CD8-positive, alpha-beta T cell (primary cell): ENCODE measurements at regions of chr7 and their contacts with region 1.

Region 1: GRCh38 chr7:149497456-149498261 is at the start of gene ZNF746:
- DNase-seq: peak; percentile 59 to 91 (median 78)
- ATAC-seq: peak; percentile 93
- H3K4me3 ChIP-seq: peak within 1 kb of the TSS; percentile 56 to 71
- H3K4me3 Mint-ChIP-seq: peak within 1 kb of the TSS; percentile 95
- H3K27ac ChIP-seq: peak within 1 kb of the TSS; percentile 40 to 51
- H3K27ac Mint-ChIP-seq: peak within 1 kb of the TSS; percentile 94
- H3K4me1 ChIP-seq: peaks cover 19% of the 10 kb centered on the region
- H3K4me1 Mint-ChIP-seq: peaks cover 32% of the 10 kb centered on the region
- H3K27me3 ChIP-seq: no peaks in the 10 kb centered on the region
- H3K27me3 Mint-ChIP-seq: no peaks in the 10 kb centered on the region
- CTCF ChIP-seq: peak; percentile 33
- total RNA-seq, gene ZNF746: 28.4 to 31.1 TPM

Region 2: DNA sequence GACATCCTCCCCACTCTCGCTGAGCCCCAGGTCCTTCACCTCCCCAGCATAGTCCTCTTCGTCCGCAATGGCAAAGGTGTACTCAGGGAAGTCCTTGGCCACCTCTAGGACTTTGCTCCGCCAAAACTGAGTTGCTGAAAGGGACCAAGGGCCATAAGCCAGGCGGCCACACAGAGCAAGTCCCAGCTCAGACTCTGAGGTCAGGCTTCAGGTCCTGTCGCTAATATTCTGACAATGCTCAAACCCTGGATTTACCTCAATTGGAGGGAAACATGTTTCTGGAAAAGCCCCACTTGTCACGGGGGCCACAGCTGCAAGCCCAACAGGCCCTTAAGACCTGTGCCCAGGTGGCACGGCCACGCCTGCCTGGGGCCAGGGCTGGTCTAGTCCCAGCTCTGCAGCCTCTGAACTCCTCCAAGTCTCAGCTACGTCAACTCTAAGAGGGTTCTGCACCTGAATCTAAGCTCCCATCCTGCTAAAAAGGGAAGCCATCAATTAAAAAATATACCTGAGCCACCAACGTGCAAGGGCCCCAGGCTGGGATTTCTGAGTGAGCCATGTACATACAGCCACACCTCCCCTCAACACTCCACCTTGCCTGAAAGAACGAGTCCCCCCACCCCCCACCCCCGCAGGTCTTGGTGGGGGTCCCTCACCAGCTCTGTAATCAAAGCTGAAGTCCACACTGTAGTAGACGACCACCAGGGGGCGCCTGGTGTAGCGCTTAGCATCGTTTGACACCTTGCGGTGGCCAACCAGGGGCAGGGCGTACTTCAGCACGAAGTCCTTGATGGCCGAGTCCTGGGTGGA is 492.2 kb before region 1 on chr7:
- CTCF ChIA-PET with region 1: no interaction called
- POLR2A ChIA-PET with region 1: no interaction called
- intact Hi-C with region 1: loop called (anchors 5 to 10 kb)
- DNase-seq: peak; percentile 61 to 91 (median 87)
- ATAC-seq: peak; percentile 92
- H3K4me3 ChIP-seq: no peak overlapping the region
- H3K4me3 Mint-ChIP-seq: no peak overlapping the region
- H3K27ac ChIP-seq: no peak overlapping the region
- H3K27ac Mint-ChIP-seq: no peak overlapping the region
- H3K4me1 ChIP-seq: peaks cover 4% of the 10 kb centered on the region
- H3K4me1 Mint-ChIP-seq: peaks cover 4% of the 10 kb centered on the region
- H3K27me3 ChIP-seq: no peaks in the 10 kb centered on the region
- H3K27me3 Mint-ChIP-seq: no peaks in the 10 kb centered on the region
- CTCF ChIP-seq: peak; percentile 75

Region 3: GRCh38 chr7:149209518-149210269 is 288.0 kb before region 1 on chr7:
- CTCF ChIA-PET with region 1: no interaction called
- POLR2A ChIA-PET with region 1: no interaction called
- intact Hi-C with region 1: loop called in 1 of 2 experiments (anchors 1 kb)
- DNase-seq: peak; percentile 30 to 70 (median 59)
- ATAC-seq: peak; percentile 86
- H3K4me3 ChIP-seq: no peak overlapping the region
- H3K4me3 Mint-ChIP-seq: no peak overlapping the region
- H3K27ac ChIP-seq: no peak overlapping the region
- H3K27ac Mint-ChIP-seq: no peak overlapping the region
- H3K4me1 ChIP-seq: no peaks in the 10 kb centered on the region
- H3K4me1 Mint-ChIP-seq: peaks cover 5% of the 10 kb centered on the region
- H3K27me3 ChIP-seq: no peaks in the 10 kb centered on the region
- H3K27me3 Mint-ChIP-seq: no peaks in the 10 kb centered on the region
- CTCF ChIP-seq: peak; percentile 58

Region 4: DNA sequence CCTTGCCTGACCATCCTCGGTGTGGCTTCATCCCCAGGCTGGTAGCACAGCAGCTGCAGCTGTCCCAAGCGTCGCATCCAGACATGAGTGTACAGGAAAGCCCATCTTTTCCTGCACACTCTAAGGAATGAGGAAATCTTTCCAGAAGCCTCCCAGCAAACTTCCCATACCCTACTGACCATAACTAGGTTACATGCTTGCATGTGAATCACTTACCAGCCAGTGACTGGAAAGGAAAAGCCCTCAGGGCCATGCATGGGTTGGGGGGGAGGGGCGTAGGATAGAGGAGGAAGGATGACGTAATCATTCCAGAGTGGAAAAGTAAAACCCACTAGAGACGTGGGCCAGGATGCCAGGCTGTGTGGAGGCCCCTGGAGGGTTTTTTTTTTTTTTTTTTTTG is 277.1 kb before region 1 on chr7:
- CTCF ChIA-PET with region 1: no interaction called
- POLR2A ChIA-PET with region 1: no interaction called
- intact Hi-C with region 1: no loop called
- DNase-seq: no peak
- ATAC-seq: no peak
- H3K4me3 ChIP-seq: no peak overlapping the region
- H3K4me3 Mint-ChIP-seq: no peak overlapping the region
- H3K27ac ChIP-seq: no peak overlapping the region
- H3K27ac Mint-ChIP-seq: no peak overlapping the region
- H3K4me1 ChIP-seq: no peaks in the 10 kb centered on the region
- H3K4me1 Mint-ChIP-seq: no peaks in the 10 kb centered on the region
- H3K27me3 ChIP-seq: no peaks in the 10 kb centered on the region
- H3K27me3 Mint-ChIP-seq: no peaks in the 10 kb centered on the region
- CTCF ChIP-seq: no peak

Region 5: GRCh38 chr7:149261829-149262617 is 235.6 kb before region 1 on chr7 and contains the start of gene ZNF783:
- CTCF ChIA-PET with region 1: no interaction called
- POLR2A ChIA-PET with region 1: no interaction called
- intact Hi-C with region 1: loop called (anchors 2 to 5 kb)
- DNase-seq: peak; percentile 68 to 96 (median 83)
- ATAC-seq: peak; percentile 93
- H3K4me3 ChIP-seq: peak within 1 kb of the TSS; percentile 69
- H3K4me3 Mint-ChIP-seq: peak within 1 kb of the TSS; percentile 86
- H3K27ac ChIP-seq: peak within 1 kb of the TSS; percentile 50 to 83
- H3K27ac Mint-ChIP-seq: peak within 1 kb of the TSS; percentile 94
- H3K4me1 ChIP-seq: peaks cover 30% of the 10 kb centered on the region
- H3K4me1 Mint-ChIP-seq: peaks cover 37% of the 10 kb centered on the region
- H3K27me3 ChIP-seq: no peaks in the 10 kb centered on the region
- H3K27me3 Mint-ChIP-seq: no peaks in the 10 kb centered on the region
- CTCF ChIP-seq: peak; percentile 87
- total RNA-seq, gene ZNF783: 24.0 to 27.3 TPM

Region 6: GRCh38 chr7:149310113-149310836 is 187.4 kb before region 1 on chr7:
- CTCF ChIA-PET with region 1: no interaction called
- POLR2A ChIA-PET with region 1: no interaction called
- intact Hi-C with region 1: no loop called
- DNase-seq: peak in 2 of 9 experiments; percentile 44 to 57
- ATAC-seq: peak; percentile 44
- H3K4me3 ChIP-seq: no peak overlapping the region
- H3K4me3 Mint-ChIP-seq: no peak overlapping the region
- H3K27ac ChIP-seq: no peak overlapping the region
- H3K27ac Mint-ChIP-seq: peak overlapping the region; percentile 52
- H3K4me1 ChIP-seq: no peaks in the 10 kb centered on the region
- H3K4me1 Mint-ChIP-seq: peaks cover 6% of the 10 kb centered on the region
- H3K27me3 ChIP-seq: no peaks in the 10 kb centered on the region
- H3K27me3 Mint-ChIP-seq: peaks cover 2% of the 10 kb centered on the region
- CTCF ChIP-seq: peak; percentile 48

Region 7: DNA sequence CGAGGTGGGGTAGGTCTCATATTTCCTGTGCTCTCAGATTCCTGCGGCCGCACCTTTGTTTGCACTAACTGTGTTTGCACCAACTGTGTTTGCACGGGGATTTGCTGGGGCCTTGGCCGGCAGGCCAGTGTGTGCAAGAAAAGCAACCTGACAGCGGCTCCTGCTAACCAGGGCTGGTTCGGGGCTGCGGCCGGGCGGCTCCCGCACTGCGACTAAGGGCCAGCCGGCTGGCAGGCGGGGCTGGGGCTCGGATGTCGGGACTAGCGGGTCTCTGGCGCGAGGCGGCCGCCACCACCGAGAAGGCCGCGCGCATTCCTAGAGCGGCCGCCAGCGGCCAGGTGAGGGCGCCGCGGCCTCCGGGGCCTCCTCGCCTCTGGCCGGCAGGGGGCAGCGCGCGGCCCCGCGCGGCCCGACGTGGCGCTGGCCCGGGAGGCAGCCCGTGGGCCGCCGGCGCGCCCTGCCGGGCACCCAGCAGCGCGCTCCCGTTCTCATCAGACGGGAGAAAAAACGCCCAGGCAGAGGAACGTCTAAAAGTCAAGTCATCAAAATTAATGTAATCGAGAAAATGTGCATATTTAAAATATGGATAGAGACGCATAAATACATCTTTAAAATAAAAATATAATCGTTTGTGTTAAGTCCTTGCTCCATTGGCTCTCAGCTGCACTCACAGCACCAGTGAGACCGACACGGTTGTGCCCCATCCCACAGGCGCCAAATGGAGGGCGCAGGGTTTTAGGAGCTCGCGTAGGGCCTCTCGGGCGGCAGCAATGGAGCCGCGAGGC is 75.3 kb before region 1 on chr7:
- CTCF ChIA-PET with region 1: interaction called, 4 read pairs
- POLR2A ChIA-PET with region 1: no interaction called
- intact Hi-C with region 1: loop called (anchors 1 kb)
- DNase-seq: peak; percentile 50 to 91 (median 66)
- ATAC-seq: peak; percentile 97
- H3K4me3 ChIP-seq: peak overlapping the region; percentile 71 to 76
- H3K4me3 Mint-ChIP-seq: peak overlapping the region; percentile 76
- H3K27ac ChIP-seq: peak overlapping the region; percentile 60 to 82
- H3K27ac Mint-ChIP-seq: peak overlapping the region; percentile 75
- H3K4me1 ChIP-seq: peaks cover 5% of the 10 kb centered on the region
- H3K4me1 Mint-ChIP-seq: peaks cover 12% of the 10 kb centered on the region
- H3K27me3 ChIP-seq: no peaks in the 10 kb centered on the region
- H3K27me3 Mint-ChIP-seq: no peaks in the 10 kb centered on the region
- CTCF ChIP-seq: no peak

Region 8: DNA sequence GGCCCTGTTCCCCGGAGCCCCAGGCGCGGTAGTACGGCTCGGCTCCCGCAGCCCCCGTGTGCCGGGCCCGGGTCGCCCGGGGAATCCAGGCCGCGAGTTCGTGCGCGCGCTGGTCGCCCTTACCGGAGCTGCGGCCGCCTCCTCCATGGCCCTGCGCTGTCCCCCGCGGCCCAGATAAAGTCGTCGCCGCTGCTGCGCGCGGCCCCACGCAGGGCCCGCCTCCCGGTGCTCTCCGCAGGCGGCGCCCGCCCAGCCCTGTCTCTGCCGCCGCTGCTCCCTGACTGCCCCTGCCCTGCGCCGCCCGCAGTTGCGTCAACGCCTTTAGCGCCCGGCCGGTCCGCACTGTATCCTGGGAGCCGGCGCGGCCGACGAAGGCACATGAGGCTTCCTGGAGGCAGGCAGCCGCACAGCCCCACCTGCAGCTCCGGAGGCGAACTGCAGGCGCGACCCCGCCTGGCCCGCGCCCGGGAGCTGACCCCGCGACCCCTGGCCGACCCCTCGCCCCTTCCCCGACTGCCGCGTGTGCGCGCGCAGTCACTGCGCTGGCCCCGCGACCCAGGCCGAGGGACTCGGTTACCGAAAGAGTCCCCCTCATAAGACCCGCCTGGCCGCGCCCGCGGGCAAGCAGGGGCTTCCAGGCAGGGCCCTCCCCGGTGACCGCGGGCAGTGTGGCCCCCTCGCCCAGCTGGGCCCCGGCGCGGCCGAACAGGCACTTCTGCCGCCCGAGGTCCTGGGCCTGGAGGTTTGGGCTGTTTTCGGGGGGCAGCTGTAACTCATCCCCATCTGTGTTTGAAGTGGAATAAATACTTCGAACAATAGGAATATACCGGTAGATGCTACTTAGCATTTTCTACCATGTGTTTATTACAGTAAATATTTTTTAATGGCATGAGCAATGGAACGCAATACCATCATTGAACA is 127.0 kb after region 1 on chr7:
- CTCF ChIA-PET with region 1: interaction called, 3 read pairs
- POLR2A ChIA-PET with region 1: interaction called, 3 read pairs
- intact Hi-C with region 1: loop called (anchors 1 to 2 kb)
- DNase-seq: peak; percentile 84 to 96 (median 90)
- ATAC-seq: peak; percentile 84
- H3K4me3 ChIP-seq: peak overlapping the region; percentile 68 to 86
- H3K4me3 Mint-ChIP-seq: peak overlapping the region; percentile 93
- H3K27ac ChIP-seq: peak overlapping the region; percentile 46 to 68
- H3K27ac Mint-ChIP-seq: peak overlapping the region; percentile 93
- H3K4me1 ChIP-seq: peaks cover 27% of the 10 kb centered on the region
- H3K4me1 Mint-ChIP-seq: peaks cover 41% of the 10 kb centered on the region
- H3K27me3 ChIP-seq: no peaks in the 10 kb centered on the region
- H3K27me3 Mint-ChIP-seq: peaks cover 3% of the 10 kb centered on the region
- CTCF ChIP-seq: peak; percentile 99